Dendritic cell treated with granulocyte-macrophage colony-stimulating factor and Interleukin-4, amounts not matched to agents 40 ng/mL and 50 ng/mL, for 4 days (primary cell): ENCODE measurements at regions of chrX and their contacts with region 1.

Region 1: GRCh38 chrX:130339408-130340222 is at the start of gene SLC25A14:
- H3K4me3 Mint-ChIP-seq: peak within 1 kb of the TSS; percentile 96
- H3K27ac Mint-ChIP-seq: peak within 1 kb of the TSS; percentile 83
- H3K4me1 Mint-ChIP-seq: peaks cover 20% of the 10 kb centered on the region
- H3K27me3 Mint-ChIP-seq: no peaks in the 10 kb centered on the region

Region 2: DNA sequence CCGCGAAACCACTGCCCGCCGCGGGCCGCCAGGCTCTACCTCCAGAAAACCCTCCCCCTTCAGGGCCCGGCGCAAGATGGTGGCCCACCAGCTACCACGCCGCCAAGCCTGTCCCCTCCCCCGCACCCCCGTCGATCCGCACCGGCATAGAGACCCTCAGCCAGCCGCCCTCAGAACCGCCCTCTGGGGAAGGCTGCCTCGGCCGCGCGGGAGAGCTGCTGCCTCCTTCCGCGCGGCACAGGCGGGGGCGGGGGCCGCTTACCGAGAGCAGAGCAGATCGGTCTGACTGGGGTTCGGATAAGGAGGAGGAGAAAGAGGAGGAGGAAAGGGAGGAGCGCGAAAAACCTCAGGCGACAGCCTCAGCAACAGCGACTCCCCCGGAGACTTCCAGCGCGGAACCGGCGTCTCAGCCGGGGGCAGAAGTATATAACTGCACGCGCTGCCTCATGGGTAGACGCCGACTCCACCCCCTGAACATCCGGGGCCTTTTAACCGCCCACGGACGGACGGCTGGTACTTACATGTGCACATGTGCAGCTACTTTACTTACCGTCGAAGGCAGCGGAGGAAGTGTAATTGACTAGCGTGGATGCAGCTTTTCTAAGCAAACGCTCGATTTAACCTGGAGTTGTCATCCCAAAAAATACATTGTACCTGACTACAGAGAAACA is 71.0 kb before region 1 on chrX and contains the start of gene ZNF280C:
- intact Hi-C with region 1: loop called (anchors 5 kb)
- H3K4me3 Mint-ChIP-seq: peak within 1 kb of the TSS; percentile 95
- H3K27ac Mint-ChIP-seq: peak within 1 kb of the TSS; percentile 86
- H3K4me1 Mint-ChIP-seq: no peaks in the 10 kb centered on the region
- H3K27me3 Mint-ChIP-seq: peaks cover 4% of the 10 kb centered on the region

Region 3: DNA sequence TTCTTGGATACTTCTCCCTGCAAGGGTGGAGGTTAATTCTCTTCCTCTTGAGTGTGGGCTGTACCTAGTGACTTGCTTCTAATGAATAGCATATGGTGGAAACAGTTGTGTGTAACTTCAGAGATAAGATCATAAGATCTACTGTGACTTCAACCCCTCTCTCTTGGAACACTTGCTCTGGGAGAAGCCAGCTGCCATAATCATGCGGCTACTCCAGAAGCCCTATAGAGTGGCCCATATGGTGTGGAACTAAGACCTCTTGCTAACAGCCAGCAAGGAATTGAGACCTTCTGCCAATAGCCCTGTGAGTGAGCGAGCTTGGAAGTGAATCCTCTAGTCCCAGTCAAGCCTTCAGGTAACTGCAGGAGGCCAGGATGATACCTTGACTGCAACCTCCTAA is 143.3 kb after region 1 on chrX:
- intact Hi-C with region 1: no loop called
- H3K4me3 Mint-ChIP-seq: no peak overlapping the region
- H3K27ac Mint-ChIP-seq: no peak overlapping the region
- H3K4me1 Mint-ChIP-seq: no peaks in the 10 kb centered on the region
- H3K27me3 Mint-ChIP-seq: no peaks in the 10 kb centered on the region